Heart left ventricle (tissue), 16 donors: ENCODE measurements at regions of chr4 and their contacts with region 1.

Region 1: GRCh38 chr4:82561745-82562515 is at the start of gene TMEM150C:
- DNase-seq: peak; percentile 49 to 70 (median 53)
- ATAC-seq: peak; percentile 44 to 88 (median 83)
- H3K4me3 ChIP-seq: peak within 1 kb of the TSS; percentile 56 to 83 (median 70)
- H3K27ac ChIP-seq: peak within 1 kb of the TSS in 10 of 12 donors; percentile 38 to 76 (median 66)
- H3K4me1 ChIP-seq: peaks cover 0 to 17% (median 6%) of the 10 kb centered on the region in 12 donors
- H3K27me3 ChIP-seq: peaks cover 0 to 26% (median 0%) of the 10 kb centered on the region in 9 donors
- CTCF ChIP-seq: peak in 8 of 12 donors; percentile 13 to 53 (median 36)
- POLR2A ChIP-seq: no peak
- total RNA-seq, gene TMEM150C: 8.8 to 22.9 (median 13.3) TPM

Region 2: GRCh38 chr4:82181789-82182188 is 380.1 kb before region 1 on chr4:
- intact Hi-C with region 1: no loop called
- DNase-seq: no peak
- ATAC-seq: no peak
- H3K4me3 ChIP-seq: no peak overlapping the region
- H3K27ac ChIP-seq: no peak overlapping the region
- H3K4me1 ChIP-seq: no peaks in the 10 kb centered on the region
- H3K27me3 ChIP-seq: no peaks in the 10 kb centered on the region
- CTCF ChIP-seq: no peak
- POLR2A ChIP-seq: no peak

Region 3: DNA sequence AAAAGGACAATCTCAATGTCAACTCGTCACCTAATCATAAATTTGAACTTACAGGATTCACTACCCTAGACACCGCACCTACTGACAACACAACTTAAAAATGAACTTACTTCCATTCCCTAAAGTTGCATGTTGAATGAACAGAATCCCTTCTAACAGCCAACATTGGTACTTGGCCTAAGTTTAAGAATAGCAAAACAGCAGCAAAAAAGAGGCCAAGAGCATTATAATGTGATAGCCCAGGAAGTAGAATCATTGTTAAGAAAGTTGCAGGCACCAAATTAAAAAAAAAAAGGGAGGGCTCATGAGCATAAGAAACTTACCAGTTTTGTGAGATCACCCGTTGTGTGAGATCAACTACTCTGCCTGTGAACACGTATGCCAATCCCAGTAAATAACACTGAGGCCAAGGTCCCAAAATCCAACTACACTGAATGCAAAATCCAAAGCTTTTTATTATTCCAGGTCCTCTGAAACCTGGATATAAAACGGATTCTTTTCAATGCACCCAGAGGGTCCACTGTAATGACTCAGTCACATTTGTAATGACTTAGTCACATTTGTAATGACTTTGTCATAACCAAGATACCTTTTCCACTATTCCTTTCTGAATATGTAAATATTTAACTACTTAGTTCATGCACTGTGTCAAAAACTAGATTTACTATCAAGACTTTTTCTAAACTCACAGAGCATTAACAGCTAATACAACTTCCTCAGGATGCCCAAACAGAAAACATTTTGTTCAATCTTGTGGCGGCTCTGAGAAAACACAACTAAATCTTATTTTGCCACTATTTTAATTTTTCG is 138.5 kb before region 1 on chr4:
- intact Hi-C with region 1: no loop called
- DNase-seq: no peak
- ATAC-seq: no peak
- H3K4me3 ChIP-seq: no peak overlapping the region
- H3K27ac ChIP-seq: no peak overlapping the region
- H3K4me1 ChIP-seq: peaks cover 0 to 44% (median 25%) of the 10 kb centered on the region in 12 donors
- H3K27me3 ChIP-seq: no peaks in the 10 kb centered on the region
- CTCF ChIP-seq: no peak
- POLR2A ChIP-seq: no peak

Region 4: DNA sequence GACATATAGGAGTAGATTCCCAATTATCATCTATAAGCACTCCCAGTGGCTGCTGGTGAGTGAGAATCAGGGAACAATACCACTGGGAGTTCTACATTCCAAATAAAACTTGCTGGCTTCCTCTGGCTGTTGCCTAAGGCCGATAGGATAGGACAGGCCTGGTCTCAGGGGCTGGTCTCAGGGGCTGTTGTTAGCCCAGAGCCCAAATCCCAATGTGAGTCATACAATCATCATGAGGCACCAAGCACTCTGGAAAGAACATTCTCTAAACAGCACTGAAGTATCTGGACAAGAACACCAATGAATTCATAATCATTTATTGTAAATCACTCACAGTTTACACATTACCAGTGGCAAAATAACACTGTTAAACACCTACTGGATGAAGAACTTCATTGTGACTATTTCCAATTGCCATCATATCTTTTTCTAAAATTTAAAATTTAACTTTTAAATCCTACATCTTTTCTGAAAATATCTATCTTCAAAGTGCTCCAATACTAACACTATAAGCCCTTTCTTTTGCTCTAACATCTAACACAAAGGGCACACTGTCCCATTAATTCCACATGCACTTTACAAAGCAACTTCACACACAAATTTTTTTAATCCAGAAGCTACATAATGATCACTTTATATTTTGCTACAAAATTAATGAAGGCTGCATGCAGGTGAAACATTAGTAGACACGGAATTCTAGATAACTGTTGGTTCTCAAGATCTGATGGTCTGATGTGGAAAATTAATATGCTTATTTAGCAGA is 67.5 kb after region 1 on chr4:
- intact Hi-C with region 1: loop called in 1 of 10 experiments (anchors 5 kb)
- DNase-seq: no peak
- ATAC-seq: no peak
- H3K4me3 ChIP-seq: no peak overlapping the region
- H3K27ac ChIP-seq: peak overlapping the region in 2 of 12 donors; percentile 15 to 24
- H3K4me1 ChIP-seq: peaks cover 0 to 34% (median 12%) of the 10 kb centered on the region in 12 donors
- H3K27me3 ChIP-seq: no peaks in the 10 kb centered on the region
- CTCF ChIP-seq: no peak
- POLR2A ChIP-seq: no peak

Region 5: GRCh38 chr4:82694046-82694445 is 132.1 kb after region 1 on chr4:
- intact Hi-C with region 1: loop called in 1 of 10 experiments (anchors 5 kb)
- DNase-seq: no peak
- ATAC-seq: no peak
- H3K4me3 ChIP-seq: no peak overlapping the region
- H3K27ac ChIP-seq: no peak overlapping the region
- H3K4me1 ChIP-seq: no peaks in the 10 kb centered on the region
- H3K27me3 ChIP-seq: no peaks in the 10 kb centered on the region
- CTCF ChIP-seq: no peak
- POLR2A ChIP-seq: no peak

Region 6: GRCh38 chr4:82721819-82722423 is 160.0 kb after region 1 on chr4:
- intact Hi-C with region 1: loop called in 1 of 10 experiments (anchors 10 kb)
- DNase-seq: peak in 4 of 5 donors; percentile 28 to 35 (median 32)
- ATAC-seq: peak; percentile 52 to 87 (median 64)
- H3K4me3 ChIP-seq: no peak overlapping the region
- H3K27ac ChIP-seq: no peak overlapping the region
- H3K4me1 ChIP-seq: peaks cover 0 to 18% (median 0%) of the 10 kb centered on the region in 12 donors
- H3K27me3 ChIP-seq: no peaks in the 10 kb centered on the region
- CTCF ChIP-seq: peak; percentile 18 to 75 (median 50)
- POLR2A ChIP-seq: no peak

Region 7: DNA sequence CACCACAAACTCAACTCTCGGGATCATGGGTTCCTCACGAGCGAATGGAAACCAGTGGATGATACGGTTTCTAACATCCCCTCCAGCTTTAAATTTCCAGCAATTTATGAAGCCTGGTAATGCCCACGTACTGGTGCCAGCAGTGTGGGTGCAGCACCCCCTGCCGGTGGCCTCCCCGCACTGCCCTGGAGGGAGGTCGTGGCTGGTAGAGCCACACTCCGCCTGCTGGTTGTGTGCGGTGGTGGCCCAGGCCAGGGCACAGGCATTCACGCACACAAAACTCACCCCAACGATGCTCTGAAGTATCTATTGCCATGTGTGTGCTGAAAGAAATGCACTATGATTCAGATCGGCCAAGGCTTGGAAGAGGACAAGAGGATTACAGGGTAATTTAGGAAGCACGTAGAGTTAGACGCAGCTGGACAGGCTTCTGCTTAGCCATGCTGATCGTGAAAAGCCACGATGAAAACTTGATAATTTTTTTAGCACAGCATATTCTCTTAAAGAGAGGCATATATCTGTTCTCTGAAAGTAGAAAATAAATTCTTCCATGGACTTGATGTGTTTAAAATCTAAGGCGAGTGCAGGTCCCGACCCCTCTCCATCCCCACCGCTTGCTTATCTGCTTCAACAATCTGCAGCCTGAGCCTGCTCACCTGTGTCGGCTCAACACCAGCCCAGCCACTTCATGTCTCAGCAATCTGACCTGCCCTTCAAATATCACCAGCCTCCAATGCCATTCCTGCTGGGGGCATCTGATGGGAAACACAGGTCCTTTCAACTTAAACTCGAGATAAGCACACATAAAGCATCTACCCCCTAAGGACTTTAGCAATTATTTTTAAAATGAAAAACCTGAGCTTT is 177.6 kb after region 1 on chr4:
- intact Hi-C with region 1: loop called in 1 of 10 experiments (anchors 10 kb)
- DNase-seq: peak; percentile 44 to 81 (median 54)
- ATAC-seq: peak; percentile 86 to 96 (median 94)
- H3K4me3 ChIP-seq: no peak overlapping the region
- H3K27ac ChIP-seq: no peak overlapping the region
- H3K4me1 ChIP-seq: no peaks in the 10 kb centered on the region
- H3K27me3 ChIP-seq: no peaks in the 10 kb centered on the region
- CTCF ChIP-seq: peak; percentile 82 to 98 (median 89)
- POLR2A ChIP-seq: no peak

Region 8: GRCh38 chr4:82811838-82812341 is 250.0 kb after region 1 on chr4:
- intact Hi-C with region 1: no loop called
- DNase-seq: no peak
- ATAC-seq: peak in 1 of 4 donors; percentile 20
- H3K4me3 ChIP-seq: no peak overlapping the region
- H3K27ac ChIP-seq: peak overlapping the region in 3 of 12 donors; percentile 12 to 59 (median 28)
- H3K4me1 ChIP-seq: peaks cover 0 to 6% (median 0%) of the 10 kb centered on the region in 12 donors
- H3K27me3 ChIP-seq: no peaks in the 10 kb centered on the region
- CTCF ChIP-seq: no peak
- POLR2A ChIP-seq: no peak